ENCODE measurements at regions of chr9 and their contacts with region 1.

Region 1: GRCh38 chr9:37329576-37329975 is 92.9 kb upstream of the GRHPR start:
- DNase-seq: peak; percentile 28
- ATAC-seq: no peak
- H3K4me3 Mint-ChIP-seq: no peak overlapping the region
- H3K27ac Mint-ChIP-seq: no peak overlapping the region
- H3K4me1 Mint-ChIP-seq: no peaks in the 10 kb centered on the region
- H3K27me3 Mint-ChIP-seq: no peaks in the 10 kb centered on the region

Region 2: GRCh38 chr9:36995927-36996705 is 333.5 kb before region 1 on chr9:
- CTCF ChIA-PET with region 1: interaction called, 21 read pairs
- POLR2A ChIA-PET with region 1: no interaction called
- DNase-seq: peak; percentile 61
- ATAC-seq: peak; percentile 74
- H3K4me3 Mint-ChIP-seq: peak overlapping the region; percentile 34
- H3K27ac Mint-ChIP-seq: no peak overlapping the region
- H3K4me1 Mint-ChIP-seq: peaks cover 4% of the 10 kb centered on the region
- H3K27me3 Mint-ChIP-seq: peaks cover 24% of the 10 kb centered on the region

Region 3: DNA sequence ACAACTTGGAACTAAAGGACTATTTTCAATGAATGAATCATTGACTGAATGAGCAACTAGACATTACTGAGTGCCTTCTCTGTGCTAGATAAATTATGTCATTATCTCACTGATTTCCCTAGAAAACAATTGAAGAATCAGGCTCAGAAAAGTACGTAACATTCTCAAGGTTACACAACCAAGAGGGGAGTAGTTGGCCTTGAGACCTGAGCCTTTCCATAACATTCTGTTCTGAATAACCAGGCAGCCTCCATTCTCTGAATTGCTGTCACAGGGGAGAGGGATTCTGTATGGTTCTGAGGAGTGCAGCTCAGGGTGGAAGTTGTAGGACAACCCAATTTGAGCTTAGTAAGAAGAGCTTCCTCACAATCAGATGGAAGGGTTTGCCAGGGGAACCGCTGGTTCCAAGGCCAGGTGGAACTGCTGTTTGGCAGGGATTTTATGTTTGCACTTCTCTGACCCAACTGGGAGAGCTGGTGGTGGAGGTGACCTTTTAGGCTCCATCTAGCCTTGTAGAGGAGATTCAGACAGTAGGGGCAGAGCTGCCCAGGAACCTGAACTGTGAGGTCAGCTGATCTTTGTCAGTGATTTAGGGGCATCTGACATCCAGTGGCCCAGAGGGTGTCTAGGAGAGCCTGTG is 172.5 kb after region 1 on chr9:
- CTCF ChIA-PET with region 1: no interaction called
- POLR2A ChIA-PET with region 1: no interaction called
- DNase-seq: no peak
- ATAC-seq: no peak
- H3K4me3 Mint-ChIP-seq: no peak overlapping the region
- H3K27ac Mint-ChIP-seq: peak overlapping the region; percentile 53
- H3K4me1 Mint-ChIP-seq: peaks cover 16% of the 10 kb centered on the region
- H3K27me3 Mint-ChIP-seq: no peaks in the 10 kb centered on the region

Region 4: DNA sequence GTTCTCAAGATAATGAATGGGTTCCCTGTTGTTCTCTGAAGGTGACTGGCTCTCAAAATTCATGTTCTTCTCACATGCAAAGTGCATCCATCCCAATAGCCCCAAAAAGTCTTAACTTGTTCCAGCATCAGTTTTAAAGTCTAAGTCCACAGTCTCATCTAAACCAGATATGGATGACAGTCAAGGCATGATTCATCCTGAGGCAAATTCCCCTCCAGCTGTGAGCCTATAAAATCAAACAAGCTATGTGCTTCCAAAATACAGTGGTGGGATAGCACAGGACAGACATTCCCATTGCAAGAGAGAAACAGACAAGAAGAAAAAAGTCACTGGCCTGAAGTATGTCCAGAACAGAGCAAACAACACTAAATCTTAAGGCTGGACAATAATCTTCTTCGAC is 221.2 kb after region 1 on chr9:
- CTCF ChIA-PET with region 1: no interaction called
- POLR2A ChIA-PET with region 1: no interaction called
- DNase-seq: no peak
- ATAC-seq: no peak
- H3K4me3 Mint-ChIP-seq: no peak overlapping the region
- H3K27ac Mint-ChIP-seq: no peak overlapping the region
- H3K4me1 Mint-ChIP-seq: no peaks in the 10 kb centered on the region
- H3K27me3 Mint-ChIP-seq: no peaks in the 10 kb centered on the region